Cardiac septum (tissue), 1 donor: ENCODE measurements at regions of chr21 and their contacts with region 1.

Region 1: DNA sequence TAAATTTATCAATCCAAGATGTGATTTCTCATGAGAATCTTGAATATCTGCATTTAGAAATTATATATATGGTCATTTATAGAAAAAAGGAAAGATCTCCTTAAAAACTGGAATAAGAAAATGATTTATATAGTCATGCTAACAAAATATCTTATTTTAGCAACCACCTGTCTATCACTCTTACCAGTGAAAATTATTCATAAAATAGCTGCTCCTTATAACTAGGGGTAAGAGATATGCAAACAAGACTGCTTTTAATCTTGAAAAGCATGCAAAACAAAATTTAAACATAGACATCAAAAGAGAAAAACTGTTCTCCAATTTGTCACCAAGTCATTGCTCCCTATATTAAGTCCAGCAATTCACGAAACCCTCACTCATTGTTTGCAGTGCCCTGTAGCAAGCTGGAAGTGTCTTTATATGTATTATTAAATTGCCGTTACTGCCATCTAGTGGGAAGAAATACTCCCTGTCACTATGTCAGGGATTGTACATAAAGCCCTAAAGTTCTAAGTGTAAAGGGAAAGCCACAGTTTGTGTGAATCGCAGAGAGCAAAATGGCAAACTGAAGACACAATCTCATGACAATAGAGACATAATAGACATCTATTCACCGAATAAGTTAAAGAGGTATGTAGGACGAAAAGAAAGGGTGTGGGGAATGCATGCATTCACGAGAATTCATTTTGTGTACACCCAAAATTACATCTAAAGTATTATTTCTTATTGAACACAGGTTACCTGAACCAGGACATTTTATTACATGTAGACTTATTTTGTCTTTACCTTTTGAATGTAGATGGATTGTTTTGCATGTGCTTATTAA is 600.5 kb downstream of the USP25 start:
- DNase-seq: no peak

Region 2: GRCh38 chr21:16082038-16082816 is 248.1 kb before region 1 on chr21:
- intact Hi-C with region 1: loop called (anchors 5 kb)
- DNase-seq: no peak

Region 3: DNA sequence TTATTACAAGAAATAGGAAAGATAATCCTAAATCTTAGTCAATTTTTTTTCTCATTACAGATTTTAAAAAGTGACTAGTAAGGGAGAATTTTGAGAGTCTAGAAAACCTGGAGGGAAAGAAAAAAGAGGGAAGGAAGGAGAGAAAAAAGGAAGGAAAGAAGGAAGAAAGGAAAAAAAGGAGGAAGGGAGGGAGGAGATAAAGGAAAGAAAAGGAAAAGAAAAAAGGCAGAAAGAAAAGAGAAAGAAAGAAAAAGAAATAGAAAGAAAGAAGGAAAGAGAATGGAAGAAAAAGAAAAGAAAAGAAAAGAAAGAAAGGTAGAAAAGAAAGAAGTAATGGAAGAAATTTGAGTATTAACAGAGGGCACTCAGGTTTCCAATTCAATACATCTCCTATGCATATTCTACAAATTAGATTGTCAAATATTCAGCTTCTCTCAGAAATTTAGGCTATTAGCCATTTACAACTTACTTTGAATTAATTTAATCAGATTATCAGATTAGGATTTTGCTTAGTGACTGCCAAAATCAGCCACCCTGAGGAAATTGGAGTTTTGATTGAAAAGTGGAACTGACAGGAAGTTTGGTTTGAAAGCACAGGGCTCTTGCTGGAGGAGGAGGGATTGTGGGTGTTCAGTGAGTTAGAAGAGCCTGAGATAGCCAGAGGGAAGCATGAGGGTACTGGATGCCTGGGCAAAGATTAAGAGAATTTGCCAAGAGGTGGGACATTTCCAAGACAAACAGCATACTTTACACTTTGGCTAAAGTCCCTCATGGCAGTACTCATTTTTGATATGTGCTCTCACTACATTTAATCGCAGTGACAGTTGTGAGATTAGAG is 77.3 kb after region 1 on chr21:
- intact Hi-C with region 1: loop called (anchors 10 kb)
- DNase-seq: no peak